Activated CD4-positive, alpha-beta memory T cell treated with anti-CD3 and anti-CD28 coated beads, Interleukin-2, amount 10 ng/mL, durations not matched to agents 7 days and 5 days (primary cell): ENCODE measurements at regions of chr3 and their contacts with region 1.

Region 1: GRCh38 chr3:150603153-150603979 is at the start of gene SELENOT:
- DNase-seq: peak; percentile 95
- H3K4me3 Mint-ChIP-seq: peak within 1 kb of the TSS; percentile 98
- H3K27ac Mint-ChIP-seq: peak within 1 kb of the TSS; percentile 98
- H3K4me1 Mint-ChIP-seq: peaks cover 64% of the 10 kb centered on the region
- H3K27me3 Mint-ChIP-seq: no peaks in the 10 kb centered on the region
- total RNA-seq, gene SELENOT: 124 to 130 TPM

Region 2: GRCh38 chr3:150408221-150409102 is 194.9 kb before region 1 on chr3 and contains the start of gene TSC22D2:
- CTCF ChIA-PET with region 1: interaction called, 3 read pairs
- POLR2A ChIA-PET with region 1: interaction called, 22 read pairs
- DNase-seq: peak; percentile 93
- H3K4me3 Mint-ChIP-seq: peak within 1 kb of the TSS; percentile 80
- H3K27ac Mint-ChIP-seq: peak within 1 kb of the TSS; percentile 91
- H3K4me1 Mint-ChIP-seq: peaks cover 33% of the 10 kb centered on the region
- H3K27me3 Mint-ChIP-seq: peaks cover 4% of the 10 kb centered on the region
- total RNA-seq, gene TSC22D2: 13.9 to 15.0 TPM

Region 3: DNA sequence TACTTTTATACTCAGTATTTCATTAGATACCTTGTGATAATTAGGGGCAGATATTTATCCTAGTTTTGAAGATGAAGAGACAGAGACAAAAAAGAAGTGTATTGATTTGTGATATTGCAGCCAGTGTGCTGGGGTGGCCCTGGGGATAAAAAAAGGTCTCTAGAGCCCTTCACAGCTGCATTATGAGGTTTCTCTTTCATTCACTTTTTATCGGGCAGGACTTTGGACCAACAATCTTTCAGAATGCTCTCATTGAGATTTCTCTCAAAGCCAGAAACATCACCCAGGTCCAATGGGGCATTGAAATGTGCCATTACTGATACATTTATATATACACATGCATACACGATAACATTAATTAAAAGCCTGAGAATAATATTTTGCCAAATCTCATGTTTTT is 20.7 kb before region 1 on chr3:
- CTCF ChIA-PET with region 1: interaction called, 8 read pairs
- POLR2A ChIA-PET with region 1: interaction called, 20 read pairs
- DNase-seq: no peak
- H3K4me3 Mint-ChIP-seq: peak overlapping the region; percentile 49
- H3K27ac Mint-ChIP-seq: peak overlapping the region; percentile 75
- H3K4me1 Mint-ChIP-seq: peaks cover 22% of the 10 kb centered on the region
- H3K27me3 Mint-ChIP-seq: no peaks in the 10 kb centered on the region

Region 4: DNA sequence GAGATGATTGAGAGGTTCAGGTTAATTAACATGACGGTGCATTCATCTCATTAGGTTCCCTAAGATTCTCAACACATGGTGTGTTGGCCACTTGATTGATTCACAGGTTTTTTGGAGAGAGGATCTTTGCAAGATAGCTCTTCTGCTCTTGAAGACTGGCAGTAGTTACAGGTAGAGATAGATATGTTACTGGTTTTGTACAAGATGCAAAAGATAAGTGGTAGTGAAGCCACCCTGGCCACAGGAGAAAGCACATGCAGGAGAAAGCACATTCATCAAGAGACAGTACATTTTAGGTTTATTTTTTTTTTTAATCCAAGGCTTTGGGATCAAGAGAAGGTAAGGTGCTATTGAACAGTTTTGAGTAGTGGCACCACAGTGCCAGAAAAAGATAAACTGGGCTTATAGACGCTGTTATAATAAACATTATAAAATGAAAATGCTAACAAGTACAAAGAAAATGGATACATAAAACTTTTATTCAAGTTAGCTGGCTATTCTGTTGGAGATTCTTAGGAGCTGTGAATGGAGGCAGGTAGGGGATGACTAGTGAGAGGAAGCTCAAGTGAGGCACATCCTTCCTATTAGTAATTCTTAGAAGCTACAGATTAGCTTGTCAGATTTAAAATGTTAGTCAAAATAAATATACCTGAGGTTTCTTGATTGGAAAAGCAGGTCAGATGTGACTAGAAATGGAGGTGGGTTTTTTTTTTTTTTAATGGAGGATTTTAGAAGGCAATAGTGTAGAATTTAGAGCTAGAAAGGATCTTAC is 10.5 kb after region 1 on chr3:
- CTCF ChIA-PET with region 1: interaction called, 7 read pairs
- POLR2A ChIA-PET with region 1: interaction called, 37 read pairs
- DNase-seq: no peak
- H3K4me3 Mint-ChIP-seq: no peak overlapping the region
- H3K27ac Mint-ChIP-seq: peak overlapping the region; percentile 41
- H3K4me1 Mint-ChIP-seq: peaks cover 54% of the 10 kb centered on the region
- H3K27me3 Mint-ChIP-seq: no peaks in the 10 kb centered on the region

Region 5: DNA sequence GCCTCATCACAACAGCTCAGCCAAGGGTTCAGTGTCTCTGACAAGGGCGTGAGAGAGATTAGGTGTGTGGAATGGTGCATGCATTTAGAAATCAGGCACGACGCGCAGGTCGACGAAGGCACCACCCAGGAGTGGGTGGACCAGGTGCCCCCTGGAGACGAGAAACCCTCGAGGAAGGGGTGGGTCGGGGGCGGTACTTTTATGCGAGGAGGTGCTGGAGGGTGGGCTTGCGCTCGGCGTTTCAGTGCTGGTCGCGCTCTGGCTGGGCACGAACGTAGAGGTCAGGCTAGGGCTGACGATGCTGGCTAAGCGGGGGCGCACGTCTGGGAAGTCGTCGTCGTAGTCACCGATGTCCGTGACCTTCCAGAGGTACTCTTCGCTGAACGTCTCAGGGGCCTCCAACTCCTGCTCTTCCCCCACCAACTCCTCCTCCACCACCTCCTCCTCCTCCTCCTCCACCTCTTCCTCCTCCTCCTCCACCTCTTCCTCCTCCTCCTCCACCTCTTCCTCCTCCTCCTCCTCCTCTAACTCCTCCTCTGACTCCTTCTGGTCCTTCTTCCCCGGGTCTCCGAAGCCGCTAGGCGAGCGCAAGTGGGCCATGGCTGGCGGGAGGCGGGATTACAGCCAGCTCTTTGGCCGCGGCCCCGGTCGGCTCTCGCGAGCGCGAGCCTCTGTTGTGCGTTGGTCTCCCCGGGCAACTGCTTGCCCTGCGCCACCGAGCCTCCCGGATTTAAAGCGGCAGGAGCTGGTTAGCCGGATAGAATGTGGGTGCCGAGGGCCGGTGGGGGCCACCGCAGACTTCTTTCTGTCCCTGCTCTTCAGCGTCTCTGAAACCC is 100.2 kb after region 1 on chr3 and contains the start of gene ERICH6:
- CTCF ChIA-PET with region 1: interaction called, 3 read pairs
- POLR2A ChIA-PET with region 1: interaction called, 15 read pairs
- DNase-seq: peak; percentile 89
- H3K4me3 Mint-ChIP-seq: peak within 1 kb of the TSS; percentile 83
- H3K27ac Mint-ChIP-seq: peak within 1 kb of the TSS; percentile 86
- H3K4me1 Mint-ChIP-seq: peaks cover 29% of the 10 kb centered on the region
- H3K27me3 Mint-ChIP-seq: peaks cover 6% of the 10 kb centered on the region
- total RNA-seq, gene ERICH6: 0.38 to 0.81 TPM